ENCODE measurements at regions of chr17 and their contacts with region 1.

Region 1: GRCh38 chr17:7004398-7005253 is 7.8 kb upstream of the RNASEK start:
- DNase-seq: peak in 1 of 4 donors; percentile 33
- ATAC-seq: peak; percentile 71
- H3K4me3 ChIP-seq: no peak overlapping the region
- H3K27ac ChIP-seq: no peak overlapping the region
- H3K4me1 ChIP-seq: no peaks in the 10 kb centered on the region
- H3K27me3 ChIP-seq: no peaks in the 10 kb centered on the region
- CTCF ChIP-seq: peak in 6 of 7 experiments; percentile 47 to 75 (median 68)
- POLR2A ChIP-seq: no peak

Region 2: GRCh38 chr17:6913608-6914443 is 90.8 kb before region 1 on chr17:
- intact Hi-C with region 1: loop called (anchors 10 kb)
- DNase-seq: peak; percentile 46 to 75 (median 65)
- ATAC-seq: no peak
- H3K4me3 ChIP-seq: no peak overlapping the region
- H3K27ac ChIP-seq: no peak overlapping the region
- H3K4me1 ChIP-seq: no peaks in the 10 kb centered on the region
- H3K27me3 ChIP-seq: no peaks in the 10 kb centered on the region
- CTCF ChIP-seq: peak; percentile 39 to 72 (median 62)
- POLR2A ChIP-seq: no peak

Region 3: GRCh38 chr17:7122381-7122780 is 117.8 kb after region 1 on chr17:
- intact Hi-C with region 1: no loop called
- DNase-seq: no peak
- ATAC-seq: no peak
- H3K4me3 ChIP-seq: no peak overlapping the region
- H3K27ac ChIP-seq: no peak overlapping the region
- H3K4me1 ChIP-seq: no peaks in the 10 kb centered on the region
- H3K27me3 ChIP-seq: peaks cover 0 to 4% of the 10 kb centered on the region in 2 donors
- CTCF ChIP-seq: no peak
- POLR2A ChIP-seq: no peak

Region 4: GRCh38 chr17:7523033-7523432 is 518.4 kb after region 1 on chr17:
- intact Hi-C with region 1: no loop called
- DNase-seq: peak in 2 of 4 donors; percentile 22 to 29
- ATAC-seq: no peak
- H3K4me3 ChIP-seq: no peak overlapping the region
- H3K27ac ChIP-seq: no peak overlapping the region
- H3K4me1 ChIP-seq: no peaks in the 10 kb centered on the region
- H3K27me3 ChIP-seq: no peaks in the 10 kb centered on the region
- CTCF ChIP-seq: peak in 6 of 7 experiments; percentile 19 to 39 (median 30)
- POLR2A ChIP-seq: no peak

Measured in body of pancreas (tissue), 4 donors.